AG04449 (cell line): ENCODE measurements at regions of chr14 and their contacts with region 1.

Region 1: GRCh38 chr14:60622917-60623257 is 26.4 kb downstream of the SIX1 start:
- DNase-seq: peak; percentile 37
- H3K4me3 ChIP-seq: no peak overlapping the region
- CTCF ChIP-seq: no peak

Region 2: DNA sequence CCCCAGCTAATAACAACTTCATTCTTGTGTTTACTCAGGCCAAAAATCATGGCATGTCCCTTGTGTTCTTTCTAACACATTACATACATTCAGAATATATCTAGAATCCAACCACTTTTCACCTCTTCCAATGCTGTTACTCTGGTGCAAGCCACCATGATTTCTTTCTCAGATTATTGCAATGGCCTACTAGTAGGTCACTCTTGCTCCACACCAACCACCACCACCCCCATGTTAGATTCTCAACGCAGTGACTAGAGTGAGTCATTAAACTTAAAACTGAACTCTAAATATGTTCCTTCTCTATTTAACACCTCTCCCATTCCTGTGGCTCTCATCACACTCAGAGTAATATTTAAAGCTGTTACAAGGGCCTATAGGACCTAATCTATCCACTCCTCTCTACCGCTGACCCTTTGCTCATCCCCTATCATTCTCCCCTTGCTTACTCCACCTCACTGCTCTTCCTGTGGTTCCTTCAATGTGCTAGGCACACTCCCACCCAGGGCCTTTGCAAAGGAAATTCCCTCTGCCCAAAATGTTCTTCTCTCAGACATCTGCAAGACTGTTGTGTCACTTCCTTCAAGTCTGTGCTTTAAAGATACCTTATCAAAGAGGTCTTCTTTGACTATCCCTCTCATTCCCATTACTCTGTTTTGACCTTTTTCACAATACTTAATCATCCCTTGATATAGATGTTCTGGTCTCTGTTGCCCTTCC is 758.9 kb before region 1 on chr14:
- CTCF ChIA-PET with region 1: no interaction called
- POLR2A ChIA-PET with region 1: no interaction called
- DNase-seq: no peak
- H3K4me3 ChIP-seq: no peak overlapping the region
- CTCF ChIP-seq: no peak

Region 3: GRCh38 chr14:60637479-60638315 is 14.8 kb after region 1 on chr14:
- CTCF ChIA-PET with region 1: interaction called, 39 read pairs
- POLR2A ChIA-PET with region 1: no interaction called
- DNase-seq: no peak
- H3K4me3 ChIP-seq: peak overlapping the region; percentile 20
- CTCF ChIP-seq: no peak

Region 4: DNA sequence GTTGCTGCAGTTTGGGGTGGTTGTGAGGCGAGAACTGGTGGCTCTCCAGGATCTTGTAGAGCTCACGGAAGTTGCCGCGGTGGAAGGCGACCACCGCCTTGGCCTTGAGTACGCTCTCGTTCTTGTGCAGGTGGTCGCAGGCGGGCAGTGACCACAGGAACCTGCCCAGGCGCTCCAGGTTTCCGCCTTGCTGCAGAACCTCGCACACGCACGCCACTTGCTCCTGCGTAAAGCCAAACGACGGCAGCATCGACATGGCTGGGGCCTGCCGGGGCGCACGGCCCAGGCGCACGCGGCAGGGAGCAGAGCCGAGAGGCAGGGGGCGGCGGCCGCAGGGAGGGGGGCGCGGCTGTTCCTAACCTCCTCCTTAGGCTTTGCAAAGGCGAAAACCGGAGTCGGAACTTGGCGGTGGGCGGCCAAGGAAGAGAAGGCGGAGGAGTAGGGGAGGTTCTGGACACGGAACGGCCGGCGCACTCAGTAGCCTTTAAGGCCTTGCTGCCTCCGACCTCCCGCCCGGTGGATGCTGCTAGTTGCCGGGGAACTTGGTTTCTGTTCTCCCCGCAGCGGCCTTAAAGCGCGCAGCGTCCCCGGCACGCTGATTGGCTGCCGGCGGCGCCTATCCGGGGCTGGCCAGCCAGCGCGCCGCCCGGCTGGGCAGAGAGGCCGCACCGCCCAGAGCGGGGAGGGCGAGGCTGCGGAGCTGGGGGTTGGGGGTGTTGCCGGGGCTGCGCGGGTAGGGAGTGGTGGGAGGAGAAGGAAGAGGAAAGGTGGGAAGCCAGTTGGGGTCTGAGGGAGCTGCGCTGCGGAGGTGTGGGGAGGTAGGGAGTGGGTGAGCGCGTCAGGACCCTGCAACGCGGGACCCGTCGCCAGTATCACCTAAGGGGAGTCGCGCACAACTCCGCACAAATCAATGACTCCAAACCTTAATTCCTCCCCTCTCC is 26.3 kb after region 1 on chr14 and contains the start of gene SIX1:
- CTCF ChIA-PET with region 1: interaction called, 14 read pairs
- POLR2A ChIA-PET with region 1: no interaction called
- DNase-seq: peak; percentile 60
- H3K4me3 ChIP-seq: peak within 1 kb of the TSS; percentile 74
- CTCF ChIP-seq: no peak

Region 5: DNA sequence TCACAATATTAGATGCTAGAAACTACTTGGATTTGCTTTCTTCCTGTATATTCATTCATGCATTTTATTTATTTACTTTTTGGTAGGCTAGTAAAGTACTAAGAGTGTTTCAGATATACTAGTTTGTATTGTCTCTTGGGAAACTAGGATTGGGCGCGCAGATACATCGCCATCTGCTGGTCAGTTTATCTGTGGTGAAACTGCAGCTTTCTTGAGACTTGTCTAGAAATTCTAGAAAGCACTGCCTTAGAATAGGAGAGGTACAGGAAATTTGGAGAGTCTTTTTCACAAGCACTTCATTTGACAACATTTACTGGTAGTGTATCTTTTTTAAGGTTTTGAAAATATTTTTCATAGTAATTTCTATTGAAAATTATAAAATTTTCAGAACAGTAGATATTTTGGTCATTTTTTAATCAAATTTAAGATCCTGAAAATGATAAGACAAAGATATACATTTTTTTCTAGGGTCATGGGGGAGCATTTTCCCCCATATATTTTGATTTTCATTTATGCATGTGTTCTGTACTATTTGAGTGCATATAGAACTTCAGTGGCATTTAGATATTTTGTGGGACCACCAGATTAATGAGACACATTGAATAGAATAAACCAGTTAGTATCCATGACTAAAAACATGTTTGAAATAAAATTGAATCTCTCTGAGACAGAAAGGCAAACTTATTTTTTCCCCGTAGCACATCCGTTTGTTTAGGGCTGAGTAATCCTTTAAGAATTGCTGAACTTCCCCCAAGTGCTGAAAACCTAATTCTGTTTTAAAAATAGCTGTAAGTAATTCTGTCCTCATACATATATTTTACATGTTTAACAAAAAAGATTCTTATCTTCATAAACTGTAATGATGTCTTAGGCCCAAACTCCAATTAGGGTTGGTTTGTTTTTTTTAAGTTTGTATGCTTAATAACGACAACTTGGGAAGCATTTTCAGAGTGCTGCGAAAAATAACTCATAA is 402.6 kb after region 1 on chr14:
- CTCF ChIA-PET with region 1: interaction called, 14 read pairs
- POLR2A ChIA-PET with region 1: no interaction called
- DNase-seq: no peak
- H3K4me3 ChIP-seq: no peak overlapping the region
- CTCF ChIP-seq: peak; percentile 70

Region 6: GRCh38 chr14:61252369-61253063 is 629.6 kb after region 1 on chr14:
- CTCF ChIA-PET with region 1: interaction called, 122 read pairs
- POLR2A ChIA-PET with region 1: no interaction called
- DNase-seq: peak; percentile 95
- H3K4me3 ChIP-seq: no peak overlapping the region
- CTCF ChIP-seq: peak; percentile 73

Region 7: DNA sequence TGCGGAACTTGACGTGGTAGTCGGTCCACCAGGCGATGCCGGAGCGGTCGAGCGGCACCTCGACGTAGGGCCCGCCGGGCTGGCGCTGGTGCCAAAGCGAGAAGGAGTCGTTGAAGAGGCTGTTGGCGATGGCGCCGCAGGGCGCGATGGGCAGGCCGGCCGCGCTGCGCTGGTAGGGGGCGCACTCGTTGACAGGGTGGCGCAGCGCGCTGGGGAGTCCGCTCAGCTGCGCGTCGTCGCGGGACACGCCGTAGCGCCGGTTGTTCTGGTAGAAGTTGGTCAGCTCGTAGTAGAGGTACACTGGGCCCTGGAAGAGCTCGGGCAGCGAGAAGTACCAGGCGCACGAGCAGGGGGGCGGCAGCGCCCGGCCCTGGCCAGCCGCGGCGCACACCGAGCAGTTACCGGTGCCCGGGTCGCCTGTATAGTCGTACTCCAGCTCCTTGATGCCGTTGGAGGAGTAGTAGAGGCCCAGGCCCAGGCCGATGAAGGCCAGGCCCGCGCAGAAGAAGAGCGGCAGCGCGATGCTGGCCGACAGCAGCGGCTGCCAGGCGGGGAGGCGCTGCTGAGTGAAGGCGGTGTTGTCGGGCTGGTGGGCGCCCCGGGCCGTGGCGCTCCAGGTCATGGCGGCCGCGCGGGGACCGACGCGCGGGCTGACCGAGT is 657.8 kb after region 1 on chr14:
- CTCF ChIA-PET with region 1: interaction called, 11 read pairs
- POLR2A ChIA-PET with region 1: no interaction called
- DNase-seq: no peak
- H3K4me3 ChIP-seq: peak overlapping the region; percentile 45
- CTCF ChIP-seq: peak; percentile 45